IMR-90 (cell line): ENCODE measurements at regions of chr11 and their contacts with region 1.

Region 1: GRCh38 chr11:46238967-46239800 is 38.3 kb upstream of the CREB3L1 start:
- DNase-seq: peak; percentile 84
- ATAC-seq: peak; percentile 66
- H3K4me3 ChIP-seq: peak overlapping the region; percentile 41
- H3K27ac ChIP-seq: peak overlapping the region; percentile 84
- H3K4me1 ChIP-seq: peaks cover 29% of the 10 kb centered on the region
- H3K27me3 ChIP-seq: no peaks in the 10 kb centered on the region
- CTCF ChIP-seq: peak; percentile 99
- POLR2A ChIP-seq: 0 out of 2 replicates have a peak, but pooled peaks have one; percentile 6
- RAD21 ChIP-seq: peak; percentile 99

Region 2: DNA sequence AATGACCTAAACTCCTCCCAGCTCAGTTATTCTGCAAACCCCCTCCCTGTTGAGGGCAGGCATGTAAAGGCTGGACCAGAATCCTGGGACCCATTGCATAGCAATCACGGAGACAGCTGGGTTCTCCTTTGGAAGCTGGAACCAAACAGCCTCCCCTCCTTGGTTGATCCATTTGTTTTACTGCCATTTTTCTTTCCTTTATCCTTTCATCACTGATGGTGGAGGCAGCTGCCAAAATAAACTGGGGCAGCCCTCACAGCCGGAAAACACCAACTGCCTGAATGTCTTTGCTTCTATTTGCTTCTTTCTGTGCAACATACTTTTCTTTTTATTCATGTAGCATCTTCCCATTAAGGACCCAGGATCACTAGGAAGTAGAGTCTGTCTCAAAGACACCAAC is 803.1 kb before region 1 on chr11:
- CTCF ChIA-PET with region 1: no interaction called
- POLR2A ChIA-PET with region 1: no interaction called
- dilution Hi-C with region 1: no loop called
- in situ Hi-C with region 1: no loop called
- intact Hi-C with region 1: no loop called
- DNase-seq: no peak
- ATAC-seq: no peak
- H3K4me3 ChIP-seq: no peak overlapping the region
- H3K27ac ChIP-seq: no peak overlapping the region
- H3K4me1 ChIP-seq: no peaks in the 10 kb centered on the region
- H3K27me3 ChIP-seq: peaks cover 9% of the 10 kb centered on the region
- CTCF ChIP-seq: no peak
- POLR2A ChIP-seq: no peak
- RAD21 ChIP-seq: no peak

Region 3: DNA sequence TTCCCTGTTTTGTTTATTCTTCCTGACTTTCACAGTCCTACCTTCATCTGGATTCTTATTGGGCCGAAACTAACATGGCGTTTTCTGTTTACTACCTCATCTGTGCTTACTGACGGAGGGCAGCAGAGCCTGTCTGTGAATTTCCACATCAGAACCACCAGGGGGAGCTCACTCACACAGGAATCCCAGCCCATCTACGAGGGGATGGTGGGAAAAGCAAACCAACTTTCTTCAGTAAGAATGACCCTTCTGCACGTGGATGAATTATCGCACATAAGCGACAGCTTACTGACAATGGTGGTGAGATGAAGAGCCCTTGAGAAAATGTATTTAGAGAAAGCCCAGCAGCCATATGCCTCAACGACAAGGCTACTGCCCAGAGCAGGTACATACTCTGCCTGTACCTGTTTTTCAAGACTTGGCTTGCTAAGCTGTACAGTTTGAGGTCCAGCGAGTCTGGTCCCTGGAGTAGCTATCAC is 274.2 kb before region 1 on chr11:
- CTCF ChIA-PET with region 1: no interaction called
- POLR2A ChIA-PET with region 1: no interaction called
- dilution Hi-C with region 1: no loop called
- in situ Hi-C with region 1: no loop called
- intact Hi-C with region 1: loop called (anchors 1 kb)
- DNase-seq: peak; percentile 80
- ATAC-seq: peak; percentile 99
- H3K4me3 ChIP-seq: no peak overlapping the region
- H3K27ac ChIP-seq: no peak overlapping the region
- H3K4me1 ChIP-seq: peaks cover 2% of the 10 kb centered on the region; the same call in 1 of the 2 replicates
- H3K27me3 ChIP-seq: no peaks in the 10 kb centered on the region
- CTCF ChIP-seq: peak; percentile 90
- POLR2A ChIP-seq: no peak
- RAD21 ChIP-seq: peak; percentile 89

Region 4: DNA sequence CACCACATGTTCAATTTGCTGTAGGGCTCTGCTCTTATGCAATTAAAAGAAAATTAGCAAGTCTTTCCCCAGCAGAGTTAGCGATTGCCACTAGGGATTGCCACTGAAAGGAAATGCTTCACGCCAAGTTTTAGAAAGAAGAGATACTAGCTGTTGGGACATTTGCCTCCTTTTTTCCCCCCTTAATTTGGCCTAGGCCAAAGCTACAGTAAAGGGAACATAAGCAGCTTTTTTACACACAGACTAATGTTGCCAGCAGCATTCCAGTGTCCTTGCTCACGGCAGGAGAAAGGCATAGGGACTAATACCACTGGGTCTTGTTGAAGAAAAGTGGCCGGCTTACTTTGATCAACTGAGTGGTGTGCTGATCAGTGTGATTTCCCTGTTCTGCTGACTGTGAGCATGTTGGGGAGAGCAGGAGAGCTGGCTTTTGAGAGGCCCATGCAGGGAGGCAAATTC is 189.2 kb before region 1 on chr11:
- CTCF ChIA-PET with region 1: no interaction called
- POLR2A ChIA-PET with region 1: no interaction called
- dilution Hi-C with region 1: no loop called
- in situ Hi-C with region 1: no loop called
- intact Hi-C with region 1: loop called (anchors 5 kb)
- DNase-seq: peak; percentile 85
- ATAC-seq: peak; percentile 92
- H3K4me3 ChIP-seq: no peak overlapping the region
- H3K27ac ChIP-seq: peak overlapping the region; percentile 5
- H3K4me1 ChIP-seq: peaks cover 18% of the 10 kb centered on the region
- H3K27me3 ChIP-seq: no peaks in the 10 kb centered on the region
- CTCF ChIP-seq: no peak
- POLR2A ChIP-seq: no peak
- RAD21 ChIP-seq: no peak

Region 5: DNA sequence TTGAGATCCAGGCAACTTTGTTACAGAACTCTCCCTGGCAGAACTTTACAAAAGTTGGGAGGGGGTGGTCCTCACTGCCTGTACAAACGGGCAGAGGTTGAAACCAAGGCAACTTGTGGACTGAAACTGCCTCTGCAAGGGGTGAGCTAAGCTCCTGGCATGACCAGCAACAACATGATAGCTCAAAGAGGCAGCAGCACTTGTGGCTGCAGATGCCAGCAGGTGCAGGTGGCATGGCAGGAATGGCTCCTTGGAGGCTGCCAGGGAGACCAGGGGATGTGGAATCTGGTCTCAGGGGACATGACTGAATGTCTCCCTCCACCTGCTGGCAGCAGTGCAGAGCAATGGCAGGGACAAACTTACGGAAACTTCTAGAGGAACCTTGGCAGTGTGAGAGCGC is 79.1 kb before region 1 on chr11:
- CTCF ChIA-PET with region 1: no interaction called
- POLR2A ChIA-PET with region 1: no interaction called
- dilution Hi-C with region 1: no loop called
- in situ Hi-C with region 1: no loop called
- intact Hi-C with region 1: no loop called
- DNase-seq: no peak
- ATAC-seq: no peak
- H3K4me3 ChIP-seq: no peak overlapping the region
- H3K27ac ChIP-seq: no peak overlapping the region
- H3K4me1 ChIP-seq: no peaks in the 10 kb centered on the region
- H3K27me3 ChIP-seq: peaks cover 46% of the 10 kb centered on the region
- CTCF ChIP-seq: no peak
- POLR2A ChIP-seq: no peak
- RAD21 ChIP-seq: no peak

Region 6: GRCh38 chr11:46278387-46279125 is 39.4 kb after region 1 on chr11:
- CTCF ChIA-PET with region 1: interaction called, 8 read pairs
- POLR2A ChIA-PET with region 1: interaction called, 7 read pairs
- dilution Hi-C with region 1: no loop called
- in situ Hi-C with region 1: loop called (anchors 5 kb)
- intact Hi-C with region 1: loop called (anchors 1 kb)
- DNase-seq: peak; percentile 59
- ATAC-seq: peak; percentile 65
- H3K4me3 ChIP-seq: peak overlapping the region; percentile 86
- H3K27ac ChIP-seq: peak overlapping the region; percentile 98
- H3K4me1 ChIP-seq: peaks cover 25% of the 10 kb centered on the region
- H3K27me3 ChIP-seq: no peaks in the 10 kb centered on the region
- CTCF ChIP-seq: peak; percentile 77
- POLR2A ChIP-seq: no peak; the same call in 1 of the 2 replicates
- RAD21 ChIP-seq: peak; percentile 67

Region 7: GRCh38 chr11:46295312-46296058 is 56.3 kb after region 1 on chr11:
- CTCF ChIA-PET with region 1: interaction called, 15 read pairs
- POLR2A ChIA-PET with region 1: interaction called, 10 read pairs
- dilution Hi-C with region 1: no loop called
- in situ Hi-C with region 1: no loop called
- intact Hi-C with region 1: loop called (anchors 1 kb)
- DNase-seq: peak; percentile 72
- ATAC-seq: peak; percentile 40
- H3K4me3 ChIP-seq: peak overlapping the region; percentile 41
- H3K27ac ChIP-seq: peak overlapping the region; percentile 98
- H3K4me1 ChIP-seq: peaks cover 68% of the 10 kb centered on the region
- H3K27me3 ChIP-seq: no peaks in the 10 kb centered on the region
- CTCF ChIP-seq: no peak
- POLR2A ChIP-seq: peak; percentile 17; the same call in 1 of the 2 replicates
- RAD21 ChIP-seq: no peak

Region 8: GRCh38 chr11:46308631-46309419 is 69.6 kb after region 1 on chr11:
- CTCF ChIA-PET with region 1: interaction called, 27 read pairs
- POLR2A ChIA-PET with region 1: interaction called, 3 read pairs
- dilution Hi-C with region 1: no loop called
- in situ Hi-C with region 1: no loop called
- intact Hi-C with region 1: loop called (anchors 1 kb)
- DNase-seq: peak; percentile 61
- ATAC-seq: peak; percentile 84
- H3K4me3 ChIP-seq: no peak overlapping the region
- H3K27ac ChIP-seq: no peak overlapping the region
- H3K4me1 ChIP-seq: peaks cover 11% of the 10 kb centered on the region
- H3K27me3 ChIP-seq: no peaks in the 10 kb centered on the region
- CTCF ChIP-seq: peak; percentile 81
- POLR2A ChIP-seq: peak; percentile 37; the same call in 1 of the 2 replicates
- RAD21 ChIP-seq: peak; percentile 89

Region 9: GRCh38 chr11:46369458-46370152 is 130.4 kb after region 1 on chr11:
- CTCF ChIA-PET with region 1: no interaction called
- POLR2A ChIA-PET with region 1: no interaction called
- dilution Hi-C with region 1: no loop called
- in situ Hi-C with region 1: no loop called
- intact Hi-C with region 1: loop called (anchors 2 kb)
- DNase-seq: peak; percentile 77
- ATAC-seq: peak; percentile 90
- H3K4me3 ChIP-seq: no peak overlapping the region
- H3K27ac ChIP-seq: no peak overlapping the region
- H3K4me1 ChIP-seq: peaks cover 10% of the 10 kb centered on the region; the same call in 1 of the 2 replicates
- H3K27me3 ChIP-seq: no peaks in the 10 kb centered on the region
- CTCF ChIP-seq: peak; percentile 87
- POLR2A ChIP-seq: no peak
- RAD21 ChIP-seq: peak; percentile 67